ENCODE measurements at regions of chr20 and their contacts with region 1.

Region 1: GRCh38 chr20:19502169-19502568 is 255.9 kb upstream of the RIN2 start:
- DNase-seq: peak; percentile 81 to 85
- ATAC-seq: peak; percentile 97
- H3K4me3 ChIP-seq: no peak overlapping the region
- H3K27ac ChIP-seq: peak overlapping the region; percentile 89 to 92 (median 89)
- H3K4me1 ChIP-seq: peaks cover 8 to 14% of the 10 kb centered on the region in 2 donors
- H3K27me3 ChIP-seq: no peaks in the 10 kb centered on the region
- CTCF ChIP-seq: no peak
- POLR2A ChIP-seq: peak in 1 of 2 donors; percentile 28

Region 2: DNA sequence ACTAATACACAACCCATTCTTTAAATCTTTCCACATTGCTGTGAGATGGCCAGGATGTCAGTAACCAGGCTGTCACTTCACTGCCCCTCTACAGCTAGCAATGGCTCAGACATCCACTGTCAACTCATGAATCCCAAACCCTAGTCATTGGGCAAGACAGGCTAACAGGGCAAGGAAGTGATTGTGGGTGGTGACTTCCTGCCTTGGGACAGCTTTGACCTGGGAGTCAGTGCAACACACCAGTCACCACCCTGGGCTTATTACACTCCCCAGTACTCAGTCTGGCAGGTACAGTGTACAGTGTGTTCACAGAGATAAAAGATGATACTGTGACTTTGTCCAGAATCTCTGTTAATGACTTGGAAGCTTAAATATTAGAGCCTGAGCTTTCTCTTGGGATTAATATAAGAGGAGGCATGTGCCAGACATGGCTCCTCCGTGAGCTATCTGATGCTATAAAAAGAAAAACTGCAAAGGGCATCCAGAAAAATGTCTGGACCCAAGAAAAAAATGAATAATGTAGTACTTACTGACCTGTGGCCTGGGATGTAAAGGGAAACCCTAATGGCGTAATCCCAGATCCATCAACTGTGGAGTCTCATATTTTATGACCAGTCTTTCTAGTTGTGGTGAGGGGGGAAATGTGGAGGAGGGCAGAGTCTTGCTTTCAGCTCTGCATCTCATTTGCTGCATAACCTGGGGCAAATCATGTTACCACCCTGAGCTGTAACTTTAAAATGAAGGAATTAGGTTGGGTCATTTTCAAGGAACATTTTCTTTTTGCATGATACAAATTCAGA is 45.4 kb before region 1 on chr20:
- in situ Hi-C with region 1: no loop called
- intact Hi-C with region 1: loop called (anchors 2 kb)
- DNase-seq: peak in 1 of 2 donors; percentile 58
- ATAC-seq: peak in 1 of 2 donors; percentile 78
- H3K4me3 ChIP-seq: no peak overlapping the region
- H3K27ac ChIP-seq: peak overlapping the region; percentile 32 to 74 (median 56)
- H3K4me1 ChIP-seq: peaks cover 37 to 51% of the 10 kb centered on the region in 2 donors
- H3K27me3 ChIP-seq: no peaks in the 10 kb centered on the region
- CTCF ChIP-seq: no peak
- POLR2A ChIP-seq: no peak

Region 3: GRCh38 chr20:19609642-19610223 is 107.6 kb after region 1 on chr20:
- in situ Hi-C with region 1: no loop called
- intact Hi-C with region 1: no loop called
- DNase-seq: no peak
- ATAC-seq: no peak
- H3K4me3 ChIP-seq: no peak overlapping the region
- H3K27ac ChIP-seq: no peak overlapping the region
- H3K4me1 ChIP-seq: no peaks in the 10 kb centered on the region
- H3K27me3 ChIP-seq: no peaks in the 10 kb centered on the region
- CTCF ChIP-seq: no peak
- POLR2A ChIP-seq: no peak